ENCODE measurements at regions of chr9 and their contacts with region 1.

Region 1: GRCh38 chr9:81848472-81848871 is 79.8 kb upstream of the SPATA31D4 start:
- DNase-seq: no peak
- H3K4me3 Mint-ChIP-seq: no peak overlapping the region
- H3K27ac Mint-ChIP-seq: no peak overlapping the region
- H3K4me1 Mint-ChIP-seq: no peaks in the 10 kb centered on the region
- H3K27me3 Mint-ChIP-seq: no peaks in the 10 kb centered on the region
- CTCF ChIP-seq: peak; percentile 15

Region 2: GRCh38 chr9:81716409-81716808 is 132.1 kb before region 1 on chr9:
- CTCF ChIA-PET with region 1: no interaction called
- intact Hi-C with region 1: loop called (anchors 10 kb)
- DNase-seq: no peak
- H3K4me3 Mint-ChIP-seq: no peak overlapping the region
- H3K27ac Mint-ChIP-seq: no peak overlapping the region
- H3K4me1 Mint-ChIP-seq: peaks cover 48% of the 10 kb centered on the region
- H3K27me3 Mint-ChIP-seq: no peaks in the 10 kb centered on the region
- CTCF ChIP-seq: no peak

Region 3: GRCh38 chr9:82299870-82300269 is 451.4 kb after region 1 on chr9:
- CTCF ChIA-PET with region 1: no interaction called
- intact Hi-C with region 1: no loop called
- DNase-seq: no peak
- H3K4me3 Mint-ChIP-seq: no peak overlapping the region
- H3K27ac Mint-ChIP-seq: no peak overlapping the region
- H3K4me1 Mint-ChIP-seq: no peaks in the 10 kb centered on the region
- H3K27me3 Mint-ChIP-seq: peaks cover 12% of the 10 kb centered on the region
- CTCF ChIP-seq: no peak

Measured in Calu3 (cell line).